ENCODE measurements at regions of chr10 and their contacts with region 1.

Region 1: DNA sequence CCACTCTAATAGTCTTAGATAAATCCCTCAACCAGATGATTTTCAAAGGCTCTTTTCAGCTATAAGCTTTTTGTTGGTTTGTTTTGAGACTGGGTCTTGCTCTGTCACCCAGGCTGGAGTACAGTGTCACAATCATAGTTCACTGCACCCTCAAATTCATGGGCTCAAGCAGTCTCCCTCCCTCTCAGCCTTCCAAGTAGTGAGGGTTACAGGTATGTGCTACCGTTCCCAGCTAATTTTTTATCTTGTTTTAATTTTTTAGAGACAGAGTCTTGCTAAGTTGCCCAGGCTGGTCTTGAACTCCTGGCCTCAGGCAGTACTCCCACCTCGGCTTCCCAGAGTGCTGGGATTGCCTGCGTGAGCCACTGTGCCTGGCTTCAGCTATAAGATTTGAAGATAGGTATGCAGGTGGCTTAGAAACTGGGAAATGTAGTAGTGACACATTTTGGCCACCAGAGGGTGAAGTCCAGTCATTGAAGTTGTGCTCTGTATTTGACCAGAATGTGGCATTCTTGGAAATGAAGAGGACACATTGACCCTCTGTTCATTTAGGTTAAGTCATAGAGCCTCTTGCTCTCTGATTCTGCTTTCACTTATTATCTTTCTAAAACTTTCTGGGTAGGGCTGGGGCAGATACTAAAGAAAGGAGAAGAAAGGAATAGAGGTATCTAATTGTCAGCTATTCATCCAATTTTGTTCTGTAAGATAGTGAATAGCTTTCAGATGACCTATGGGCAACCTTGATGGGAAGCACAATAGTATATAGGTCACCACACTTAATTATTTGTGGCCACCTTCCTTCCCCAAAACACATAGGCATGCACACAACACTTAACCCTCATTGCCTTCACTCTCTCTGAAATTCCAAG is 36.0 kb downstream of the R3HCC1L start:
- DNase-seq: peak; percentile 11 to 31 (median 27)
- H3K4me3 ChIP-seq: no peak overlapping the region
- H3K4me3 Mint-ChIP-seq: no peak overlapping the region
- H3K27ac ChIP-seq: no peak overlapping the region
- H3K27ac Mint-ChIP-seq: no peak overlapping the region
- H3K4me1 ChIP-seq: no peaks in the 10 kb centered on the region
- H3K4me1 Mint-ChIP-seq: no peaks in the 10 kb centered on the region
- H3K27me3 ChIP-seq: no peaks in the 10 kb centered on the region
- H3K27me3 Mint-ChIP-seq: no peaks in the 10 kb centered on the region
- CTCF ChIP-seq: peak; percentile 88

Region 2: DNA sequence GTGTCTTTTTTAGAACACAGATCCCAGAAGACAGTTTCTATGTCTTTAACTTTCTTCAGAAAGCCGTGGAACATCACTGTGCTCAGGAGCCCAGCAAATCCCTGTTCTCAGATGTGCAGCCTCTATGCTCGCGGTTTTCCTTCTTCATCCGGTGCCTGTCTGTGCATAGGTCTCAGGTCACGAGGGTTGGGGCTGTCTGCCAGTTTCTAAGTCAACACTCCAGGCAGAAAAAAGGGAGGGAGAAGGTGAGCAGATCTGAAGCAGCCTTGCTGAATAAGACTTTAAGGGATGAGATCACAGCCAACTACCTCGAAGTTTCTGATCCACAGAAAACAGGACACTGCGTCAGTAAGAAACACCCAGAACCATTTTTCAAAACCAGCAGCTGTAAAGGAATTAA is 208.5 kb before region 1 on chr10:
- intact Hi-C with region 1: no loop called
- DNase-seq: no peak
- H3K4me3 ChIP-seq: no peak overlapping the region
- H3K4me3 Mint-ChIP-seq: no peak overlapping the region
- H3K27ac ChIP-seq: no peak overlapping the region
- H3K27ac Mint-ChIP-seq: no peak overlapping the region
- H3K4me1 ChIP-seq: no peaks in the 10 kb centered on the region
- H3K4me1 Mint-ChIP-seq: no peaks in the 10 kb centered on the region
- H3K27me3 ChIP-seq: peaks cover 0 to 2% of the 10 kb centered on the region in 2 donors
- H3K27me3 Mint-ChIP-seq: peaks cover 25 to 37% (median 29%) of the 10 kb centered on the region in 3 donors
- CTCF ChIP-seq: no peak

Region 3: GRCh38 chr10:98309366-98310355 is 139.2 kb after region 1 on chr10:
- intact Hi-C with region 1: loop called in 1 of 2 experiments (anchors 10 kb)
- DNase-seq: peak in 2 of 3 donors; percentile 48 to 53
- H3K4me3 ChIP-seq: no peak overlapping the region
- H3K4me3 Mint-ChIP-seq: peak overlapping the region; percentile 31 to 75
- H3K27ac ChIP-seq: no peak overlapping the region
- H3K27ac Mint-ChIP-seq: no peak overlapping the region
- H3K4me1 ChIP-seq: peaks cover 15 to 27% of the 10 kb centered on the region in 2 donors
- H3K4me1 Mint-ChIP-seq: peaks cover 24% of the 10 kb centered on the region
- H3K27me3 ChIP-seq: peaks cover 6 to 11% of the 10 kb centered on the region in 2 donors
- H3K27me3 Mint-ChIP-seq: peaks cover 21 to 28% (median 23%) of the 10 kb centered on the region in 3 donors
- CTCF ChIP-seq: peak; percentile 76